Activated CD8-positive, alpha-beta T cell treated with anti-CD3 and anti-CD28 coated beads, Interleukin-2, amount 10 ng/mL, durations not matched to agents 7 days and 5 days (primary cell): ENCODE measurements at regions of chr17 and their contacts with region 1.

Region 1: GRCh38 chr17:29617125-29617480 is 5.6 kb downstream of the CORO6 start:
- DNase-seq: peak; percentile 95
- ATAC-seq: peak; percentile 65
- H3K4me3 Mint-ChIP-seq: peak overlapping the region; percentile 81
- H3K27ac Mint-ChIP-seq: peak overlapping the region; percentile 94
- H3K4me1 Mint-ChIP-seq: peaks cover 64% of the 10 kb centered on the region
- H3K27me3 Mint-ChIP-seq: peaks cover 3% of the 10 kb centered on the region

Region 2: GRCh38 chr17:29533976-29534375 is 83.1 kb before region 1 on chr17:
- CTCF ChIA-PET with region 1: no interaction called
- POLR2A ChIA-PET with region 1: no interaction called
- DNase-seq: no peak
- ATAC-seq: no peak
- H3K4me3 Mint-ChIP-seq: no peak overlapping the region
- H3K27ac Mint-ChIP-seq: no peak overlapping the region
- H3K4me1 Mint-ChIP-seq: no peaks in the 10 kb centered on the region
- H3K27me3 Mint-ChIP-seq: no peaks in the 10 kb centered on the region

Region 3: GRCh38 chr17:29589524-29590410 is 27.3 kb before region 1 on chr17 and contains the start of gene GIT1:
- CTCF ChIA-PET with region 1: interaction called, 107 read pairs
- POLR2A ChIA-PET with region 1: interaction called, 14 read pairs
- DNase-seq: peak; percentile 87
- ATAC-seq: peak; percentile 74
- H3K4me3 Mint-ChIP-seq: peak within 1 kb of the TSS; percentile 97
- H3K27ac Mint-ChIP-seq: peak within 1 kb of the TSS; percentile 90
- H3K4me1 Mint-ChIP-seq: peaks cover 73% of the 10 kb centered on the region
- H3K27me3 Mint-ChIP-seq: no peaks in the 10 kb centered on the region
- total RNA-seq, gene GIT1: 72.7 to 75.1 TPM

Region 4: DNA sequence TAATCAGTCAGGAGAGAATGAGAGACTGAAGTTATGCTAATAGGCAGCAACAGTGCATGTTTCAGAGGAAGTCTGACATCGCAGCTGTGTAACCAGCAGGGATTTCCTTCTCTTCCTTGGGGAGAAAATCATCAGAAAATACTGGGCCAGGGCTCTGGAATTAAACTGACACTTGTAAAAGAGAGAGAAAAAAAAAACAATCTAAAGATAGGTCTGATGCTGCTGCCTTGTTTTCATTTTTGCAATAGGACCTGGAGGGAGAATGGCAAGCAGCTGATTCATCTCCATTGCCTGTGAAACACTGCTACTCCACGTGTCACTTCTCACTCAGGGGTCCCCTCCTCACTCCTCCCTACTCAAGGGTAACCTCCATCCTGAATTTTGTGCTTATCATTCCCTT is 23.3 kb after region 1 on chr17:
- CTCF ChIA-PET with region 1: interaction called, 110 read pairs
- POLR2A ChIA-PET with region 1: interaction called, 3 read pairs
- DNase-seq: no peak
- ATAC-seq: no peak
- H3K4me3 Mint-ChIP-seq: no peak overlapping the region
- H3K27ac Mint-ChIP-seq: peak overlapping the region; percentile 12
- H3K4me1 Mint-ChIP-seq: peaks cover 19% of the 10 kb centered on the region
- H3K27me3 Mint-ChIP-seq: no peaks in the 10 kb centered on the region

Region 5: GRCh38 chr17:29705386-29705785 is 88.3 kb after region 1 on chr17:
- CTCF ChIA-PET with region 1: interaction called, 39 read pairs
- POLR2A ChIA-PET with region 1: interaction called, 14 read pairs
- DNase-seq: no peak
- ATAC-seq: no peak
- H3K4me3 Mint-ChIP-seq: peak overlapping the region; percentile 54
- H3K27ac Mint-ChIP-seq: peak overlapping the region; percentile 91
- H3K4me1 Mint-ChIP-seq: peaks cover 42% of the 10 kb centered on the region
- H3K27me3 Mint-ChIP-seq: no peaks in the 10 kb centered on the region

Region 6: DNA sequence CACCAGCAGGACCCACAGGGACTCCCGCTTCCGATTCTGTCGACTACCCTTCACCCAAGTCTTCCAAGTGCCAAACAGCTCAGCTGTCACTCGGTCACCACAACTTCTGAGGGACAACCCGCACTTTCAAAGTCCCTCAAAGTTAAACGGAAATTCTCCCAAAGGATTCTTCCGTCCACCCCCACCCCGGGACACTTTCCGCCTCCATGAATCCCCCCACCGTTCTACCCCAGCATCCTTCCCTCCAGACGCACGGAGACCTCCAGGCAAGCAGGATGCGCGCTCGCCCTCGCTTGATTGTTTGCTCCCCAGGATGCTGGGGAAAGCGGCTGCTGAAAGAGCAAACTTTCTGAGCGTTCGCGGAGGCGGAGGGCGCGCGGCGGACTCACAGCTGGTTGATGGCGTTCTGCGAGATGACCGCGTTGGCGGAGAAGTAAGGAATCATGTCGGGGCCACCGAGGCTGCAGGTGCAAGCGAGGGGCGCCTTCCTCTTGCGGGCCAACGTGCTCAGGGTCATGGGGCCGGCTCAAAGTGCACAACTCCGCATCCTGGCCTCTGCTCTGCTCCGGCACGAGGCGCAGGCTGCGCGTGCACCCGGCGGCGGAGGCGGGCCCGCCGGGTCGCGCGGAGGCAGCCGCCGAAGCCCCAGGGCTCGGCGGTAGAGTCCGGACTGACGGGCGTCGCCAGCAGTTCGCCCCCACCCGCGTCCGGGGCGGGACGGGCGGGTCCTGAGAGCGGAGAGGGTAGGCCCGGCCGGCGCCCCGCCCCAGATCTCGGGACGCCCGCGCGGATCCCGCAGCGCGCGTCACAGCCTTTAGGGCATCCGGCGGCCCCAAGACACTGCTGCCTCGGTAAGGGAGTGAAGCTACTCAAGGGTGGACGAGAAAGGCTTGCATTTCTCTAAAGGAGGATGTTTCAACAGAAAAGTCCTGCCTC is 143.9 kb after region 1 on chr17:
- CTCF ChIA-PET with region 1: interaction called, 33 read pairs
- POLR2A ChIA-PET with region 1: interaction called, 5 read pairs
- DNase-seq: peak; percentile 94
- ATAC-seq: peak; percentile 92
- H3K4me3 Mint-ChIP-seq: peak overlapping the region; percentile 87
- H3K27ac Mint-ChIP-seq: peak overlapping the region; percentile 99
- H3K4me1 Mint-ChIP-seq: peaks cover 44% of the 10 kb centered on the region
- H3K27me3 Mint-ChIP-seq: no peaks in the 10 kb centered on the region